Endothelial cell of umbilical vein (primary cell): ENCODE measurements at regions of chr5 and their contacts with region 1.

Region 1: GRCh38 chr5:54517174-54518092 is at the start of gene SNX18:
- DNase-seq: peak; percentile 89
- H3K4me3 ChIP-seq: peak within 1 kb of the TSS; percentile 40 to 60 (median 45)
- H3K27ac ChIP-seq: peak within 1 kb of the TSS; percentile 38
- H3K4me1 ChIP-seq: peaks cover 44% of the 10 kb centered on the region
- H3K27me3 ChIP-seq: no peaks in the 10 kb centered on the region
- CTCF ChIP-seq: peak; percentile 94 to 96
- POLR2A ChIP-seq: peak; percentile 92
- total RNA-seq, gene SNX18: 25.2 and 25.3 TPM in 2 replicates

Region 2: DNA sequence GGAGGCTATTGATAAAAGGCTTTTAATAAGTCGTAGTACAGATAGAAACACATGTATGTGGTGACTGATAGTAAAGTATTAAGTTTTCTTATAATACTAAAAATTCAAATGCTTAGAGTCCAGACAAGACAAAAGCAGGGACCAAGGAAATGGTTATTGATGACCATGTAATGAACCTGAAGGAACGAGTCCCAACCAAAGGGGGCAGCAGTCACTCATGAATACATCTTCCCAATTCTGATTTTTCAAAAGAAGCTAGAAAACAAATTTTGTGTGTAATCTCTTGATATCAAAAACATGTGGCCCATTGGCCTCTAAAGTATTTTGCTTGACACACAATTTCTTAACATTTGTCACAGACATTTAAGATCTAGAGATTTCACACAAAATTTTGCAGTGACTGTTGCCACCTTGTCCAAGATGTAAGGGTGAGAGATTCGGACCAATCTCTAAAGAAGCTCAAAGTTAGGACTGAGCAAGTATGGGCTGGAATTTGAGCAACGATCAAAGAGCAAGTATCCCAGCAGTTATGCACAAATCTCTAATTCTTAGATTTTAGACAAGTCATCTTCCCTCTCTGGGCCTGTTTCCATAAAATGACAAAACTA is 273.9 kb before region 1 on chr5:
- CTCF ChIA-PET with region 1: interaction called, 17 read pairs
- POLR2A ChIA-PET with region 1: no interaction called
- dilution Hi-C with region 1: no loop called
- intact Hi-C with region 1: loop called (anchors 1 kb)
- DNase-seq: peak; percentile 47
- H3K4me3 ChIP-seq: no peak overlapping the region
- H3K27ac ChIP-seq: no peak overlapping the region
- H3K4me1 ChIP-seq: peaks cover 14% of the 10 kb centered on the region
- H3K27me3 ChIP-seq: peaks cover 0 to 1% of the 10 kb centered on the region in 2 experiments
- CTCF ChIP-seq: peak; percentile 44 to 48
- POLR2A ChIP-seq: no peak

Region 3: DNA sequence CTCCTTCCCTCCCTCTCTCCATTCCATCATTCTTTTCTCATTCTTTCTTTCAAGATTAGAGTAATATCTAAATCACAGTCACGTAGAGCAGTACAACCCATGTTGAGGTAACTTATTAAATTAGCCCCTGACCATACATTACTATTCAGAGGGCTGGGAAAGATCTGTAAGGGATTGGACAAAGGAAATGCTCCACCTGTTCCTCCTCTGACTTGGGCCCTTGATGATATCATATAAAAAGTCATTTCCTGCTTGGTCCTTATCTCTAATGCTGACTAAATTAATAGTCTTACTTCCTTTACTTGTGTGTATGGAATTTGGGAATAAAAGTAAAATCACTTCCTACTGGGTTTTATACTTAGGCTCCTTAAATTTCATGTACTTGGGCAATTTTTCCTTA is 40.9 kb after region 1 on chr5:
- CTCF ChIA-PET with region 1: interaction called, 11 read pairs
- POLR2A ChIA-PET with region 1: no interaction called
- dilution Hi-C with region 1: no loop called
- intact Hi-C with region 1: loop called (anchors 1 kb)
- DNase-seq: peak; percentile 76
- H3K4me3 ChIP-seq: peak overlapping the region in 1 of 3 experiments; percentile 5
- H3K27ac ChIP-seq: peak overlapping the region; percentile 58
- H3K4me1 ChIP-seq: peaks cover 41% of the 10 kb centered on the region
- H3K27me3 ChIP-seq: no peaks in the 10 kb centered on the region
- CTCF ChIP-seq: no peak
- POLR2A ChIP-seq: no peak

Region 4: GRCh38 chr5:54743997-54744788 is 226.8 kb after region 1 on chr5:
- CTCF ChIA-PET with region 1: interaction called, 29 read pairs
- POLR2A ChIA-PET with region 1: interaction called, 3 read pairs
- dilution Hi-C with region 1: no loop called
- intact Hi-C with region 1: loop called (anchors 1 kb)
- DNase-seq: peak; percentile 73
- H3K4me3 ChIP-seq: no peak overlapping the region
- H3K27ac ChIP-seq: peak overlapping the region; percentile 46
- H3K4me1 ChIP-seq: peaks cover 20% of the 10 kb centered on the region
- H3K27me3 ChIP-seq: no peaks in the 10 kb centered on the region
- CTCF ChIP-seq: no peak
- POLR2A ChIP-seq: no peak

Region 5: DNA sequence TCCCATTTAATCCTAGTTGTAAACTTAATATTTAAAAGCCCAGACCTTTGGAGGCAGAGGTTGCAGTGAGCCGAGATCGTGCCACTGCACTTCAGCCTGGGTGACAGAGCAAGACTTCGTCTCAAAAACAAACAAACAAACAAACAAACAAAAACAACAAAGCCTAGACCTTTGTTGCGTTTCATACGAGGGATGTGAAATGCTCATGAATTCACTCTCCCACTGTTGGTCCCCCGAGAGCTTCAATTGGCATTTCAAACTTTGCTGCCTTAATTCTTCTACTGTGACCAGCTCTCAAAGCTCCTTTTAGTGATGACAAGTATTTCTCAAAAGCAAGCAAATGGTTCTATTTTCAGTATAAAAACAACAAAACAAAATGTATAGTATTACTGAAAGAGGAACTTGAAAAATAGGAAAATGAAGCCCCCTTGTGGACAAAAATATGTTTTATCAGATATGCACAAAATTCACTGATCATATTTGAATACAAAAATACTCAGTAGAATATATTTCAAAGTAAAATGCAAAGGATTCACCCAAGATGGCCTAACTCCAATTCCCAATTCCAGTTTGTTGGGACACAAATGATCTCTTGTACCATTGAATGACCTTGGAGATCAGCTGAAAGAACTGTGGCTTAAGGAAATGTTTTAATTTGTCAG is 327.6 kb after region 1 on chr5:
- CTCF ChIA-PET with region 1: interaction called, 218 read pairs
- POLR2A ChIA-PET with region 1: no interaction called
- dilution Hi-C with region 1: no loop called
- intact Hi-C with region 1: loop called (anchors 1 kb)
- DNase-seq: peak; percentile 65
- H3K4me3 ChIP-seq: no peak overlapping the region
- H3K27ac ChIP-seq: no peak overlapping the region
- H3K4me1 ChIP-seq: peaks cover 6% of the 10 kb centered on the region
- H3K27me3 ChIP-seq: peaks cover 0 to 2% of the 10 kb centered on the region in 2 experiments
- CTCF ChIP-seq: peak; percentile 17 to 45
- POLR2A ChIP-seq: no peak

Region 6: GRCh38 chr5:54874373-54874921 is 357.0 kb after region 1 on chr5:
- CTCF ChIA-PET with region 1: interaction called, 24 read pairs
- POLR2A ChIA-PET with region 1: no interaction called
- dilution Hi-C with region 1: no loop called
- intact Hi-C with region 1: no loop called
- DNase-seq: peak; percentile 92
- H3K4me3 ChIP-seq: no peak overlapping the region
- H3K27ac ChIP-seq: no peak overlapping the region
- H3K4me1 ChIP-seq: peaks cover 3% of the 10 kb centered on the region
- H3K27me3 ChIP-seq: peaks cover 0 to 4% of the 10 kb centered on the region in 2 experiments
- CTCF ChIP-seq: no peak
- POLR2A ChIP-seq: no peak

Region 7: DNA sequence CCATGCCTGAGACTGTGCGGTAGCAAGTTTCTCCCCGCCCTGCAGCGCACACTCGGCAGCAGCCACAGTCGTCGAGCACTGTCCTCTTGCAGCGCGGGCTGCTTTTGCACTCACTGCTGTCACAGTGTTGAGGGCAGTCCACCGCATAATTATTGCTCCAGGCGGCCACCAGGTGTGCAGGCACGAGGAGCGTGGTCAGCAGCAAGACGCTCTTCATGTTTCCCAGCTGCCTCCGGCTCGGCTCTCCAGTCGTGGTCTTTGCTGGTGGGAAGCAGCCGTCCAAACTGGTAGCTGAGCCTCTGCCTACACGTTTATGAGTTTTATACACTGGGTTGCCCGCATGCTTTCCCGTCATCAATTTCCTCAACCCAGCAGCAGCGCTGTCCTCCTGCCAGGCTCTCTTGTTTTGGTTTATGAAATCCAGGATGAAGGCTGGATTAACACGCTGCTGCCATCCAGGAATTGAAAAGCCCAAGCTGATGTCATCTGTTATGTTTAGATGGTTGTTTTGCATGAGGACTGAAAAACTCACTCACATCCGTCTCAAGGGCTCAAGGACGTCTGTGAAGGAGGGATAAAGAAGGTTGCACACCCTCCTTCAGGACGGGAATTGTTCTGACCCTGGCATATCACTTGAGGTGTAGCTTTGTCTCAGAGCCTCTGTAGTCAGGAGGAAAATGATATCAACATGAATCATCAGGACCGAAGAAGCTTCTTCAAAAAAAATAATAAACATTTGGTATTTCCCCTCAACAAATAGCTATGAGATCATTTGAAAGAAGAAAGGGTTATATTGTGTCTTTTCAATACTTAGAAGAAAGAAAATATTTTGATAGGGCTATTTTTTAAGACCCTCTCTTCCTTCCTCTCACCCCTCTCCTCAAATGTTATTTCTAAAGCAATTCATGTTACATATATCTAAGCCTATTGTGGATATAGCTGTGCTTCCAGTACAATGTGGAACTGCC is 468.2 kb after region 1 on chr5 and contains the start of gene ESM1:
- CTCF ChIA-PET with region 1: no interaction called
- POLR2A ChIA-PET with region 1: no interaction called
- dilution Hi-C with region 1: no loop called
- intact Hi-C with region 1: loop called (anchors 10 kb)
- DNase-seq: peak; percentile 99
- H3K4me3 ChIP-seq: peak within 1 kb of the TSS; percentile 69 to 99 (median 97)
- H3K27ac ChIP-seq: peak within 1 kb of the TSS; percentile 99
- H3K4me1 ChIP-seq: peaks cover 45% of the 10 kb centered on the region
- H3K27me3 ChIP-seq: no peaks in the 10 kb centered on the region
- CTCF ChIP-seq: peak; percentile 28 to 34
- POLR2A ChIP-seq: peak; percentile 92
- total RNA-seq, gene ESM1: 577 and 781 TPM in 2 replicates